Prostate gland (tissue), 2 donors: ENCODE measurements at regions of chr7 and their contacts with region 1.

Region 1: GRCh38 chr7:35701287-35701900 is 6.5 kb upstream of the HERPUD2 start:
- DNase-seq: no peak
- H3K4me3 ChIP-seq: no peak overlapping the region
- H3K27ac ChIP-seq: no peak overlapping the region
- H3K4me1 ChIP-seq: no peaks in the 10 kb centered on the region
- H3K27me3 ChIP-seq: no peaks in the 10 kb centered on the region
- CTCF ChIP-seq: no peak
- POLR2A ChIP-seq: no peak

Region 2: GRCh38 chr7:36312344-36313334 is 611.2 kb after region 1 on chr7:
- intact Hi-C with region 1: loop called (anchors 10 kb)
- DNase-seq: peak; percentile 48
- H3K4me3 ChIP-seq: no peak overlapping the region
- H3K27ac ChIP-seq: no peak overlapping the region
- H3K4me1 ChIP-seq: no peaks in the 10 kb centered on the region
- H3K27me3 ChIP-seq: no peaks in the 10 kb centered on the region
- CTCF ChIP-seq: peak in 3 of 4 experiments; percentile 24 to 69 (median 54)
- POLR2A ChIP-seq: no peak